ENCODE measurements at regions of chr1 and their contacts with region 1.

Region 1: GRCh38 chr1:185595835-185596667 is 138.1 kb upstream of the HMCN1 start:
- DNase-seq: peak in 34 of 35 experiments; percentile 7 to 74 (median 46)
- ATAC-seq: peak; percentile 63 to 82 (median 76)
- H3K4me3 ChIP-seq: no peak overlapping the region
- H3K4me3 Mint-ChIP-seq: no peak overlapping the region
- H3K27ac ChIP-seq: no peak overlapping the region
- H3K27ac Mint-ChIP-seq: peak overlapping the region; percentile 41 to 75
- H3K4me1 ChIP-seq: peaks cover 9 to 10% of the 10 kb centered on the region in 2 experiments
- H3K4me1 Mint-ChIP-seq: peaks cover 26 to 37% (median 26%) of the 10 kb centered on the region in 3 donors
- H3K27me3 ChIP-seq: no peaks in the 10 kb centered on the region
- H3K27me3 Mint-ChIP-seq: no peaks in the 10 kb centered on the region

Region 2: DNA sequence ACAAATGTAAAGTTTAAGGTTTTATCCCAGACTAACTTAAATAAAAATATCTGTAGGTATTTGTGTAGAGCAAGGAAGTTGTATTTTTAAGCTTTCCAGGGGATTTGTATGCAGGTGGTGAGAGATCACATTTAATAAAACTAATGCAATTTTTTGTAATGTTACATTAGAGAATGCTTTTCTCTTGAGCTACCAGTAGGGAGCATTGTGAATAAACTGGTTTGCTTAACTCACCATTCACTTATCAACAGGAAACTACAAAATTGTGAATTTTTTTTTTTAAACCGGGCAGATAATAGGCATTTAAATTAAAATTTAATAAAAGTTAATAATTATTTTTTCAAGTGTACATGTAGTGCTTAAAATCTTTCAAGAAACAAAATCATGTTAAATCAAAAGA is 357.6 kb before region 1 on chr1:
- CTCF ChIA-PET with region 1: interaction called, 4 to 22 read pairs
- POLR2A ChIA-PET with region 1: no interaction called
- DNase-seq: peak in 1 of 35 experiments; percentile 50
- ATAC-seq: peak in 3 of 4 experiments; percentile 42 to 71 (median 69)
- H3K4me3 ChIP-seq: no peak overlapping the region
- H3K4me3 Mint-ChIP-seq: peak overlapping the region in 2 of 3 donors; percentile 31 to 35
- H3K27ac ChIP-seq: no peak overlapping the region
- H3K27ac Mint-ChIP-seq: peak overlapping the region in 1 of 2 donors; percentile 5
- H3K4me1 ChIP-seq: peaks cover 0 to 14% of the 10 kb centered on the region in 2 experiments
- H3K4me1 Mint-ChIP-seq: peaks cover 30 to 38% (median 34%) of the 10 kb centered on the region in 3 donors
- H3K27me3 ChIP-seq: no peaks in the 10 kb centered on the region
- H3K27me3 Mint-ChIP-seq: no peaks in the 10 kb centered on the region

Region 3: DNA sequence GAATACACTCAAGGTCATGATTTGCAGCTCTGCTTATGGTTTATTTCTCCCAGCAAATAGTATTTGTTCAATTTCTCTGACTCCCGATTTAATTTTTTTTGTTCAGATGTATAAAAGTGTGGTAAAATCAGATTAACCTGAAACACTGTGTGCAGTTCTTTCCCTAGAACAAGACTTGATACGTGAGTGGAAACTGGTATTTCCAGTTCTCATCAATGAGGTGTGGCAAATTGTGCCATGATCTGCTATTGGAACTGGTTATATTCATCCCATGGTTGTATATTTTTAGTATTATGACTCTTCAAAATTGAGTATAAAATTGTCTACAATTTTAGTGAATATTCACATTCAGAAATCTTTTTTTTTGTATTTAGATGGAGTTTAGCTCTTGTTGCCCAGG is 202.2 kb before region 1 on chr1:
- CTCF ChIA-PET with region 1: interaction called, 5 to 10 read pairs
- POLR2A ChIA-PET with region 1: no interaction called
- DNase-seq: no peak
- ATAC-seq: no peak
- H3K4me3 ChIP-seq: no peak overlapping the region
- H3K4me3 Mint-ChIP-seq: no peak overlapping the region
- H3K27ac ChIP-seq: no peak overlapping the region
- H3K27ac Mint-ChIP-seq: no peak overlapping the region
- H3K4me1 ChIP-seq: no peaks in the 10 kb centered on the region
- H3K4me1 Mint-ChIP-seq: peaks cover 0 to 5% (median 3%) of the 10 kb centered on the region in 3 donors
- H3K27me3 ChIP-seq: no peaks in the 10 kb centered on the region
- H3K27me3 Mint-ChIP-seq: no peaks in the 10 kb centered on the region

Region 4: DNA sequence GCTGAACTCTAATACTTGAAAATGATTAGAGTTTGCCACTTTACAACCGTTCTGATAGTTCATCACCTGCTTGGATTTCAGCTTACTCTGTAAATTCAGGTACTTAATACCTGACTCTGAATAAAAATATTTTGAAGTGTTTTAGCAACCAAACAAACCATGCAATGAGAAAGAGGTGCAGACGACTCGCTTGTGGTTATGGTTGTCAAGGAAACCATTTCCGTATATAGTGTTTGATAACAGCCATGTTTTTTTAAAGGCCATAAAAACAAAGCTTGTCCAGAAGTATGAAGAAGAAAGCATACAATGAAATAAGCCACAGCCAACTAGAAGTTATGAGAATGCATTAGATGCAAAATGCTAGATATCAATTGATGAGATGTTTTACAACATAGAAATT is 29.1 kb before region 1 on chr1:
- CTCF ChIA-PET with region 1: interaction called, 4 to 36 read pairs
- POLR2A ChIA-PET with region 1: interaction called, 3 to 8 read pairs
- DNase-seq: peak in 33 of 35 experiments; percentile 8 to 94 (median 52)
- ATAC-seq: peak; percentile 89 to 91 (median 89)
- H3K4me3 ChIP-seq: peak overlapping the region in 1 of 2 donors; percentile 18
- H3K4me3 Mint-ChIP-seq: peak overlapping the region; percentile 55 to 67 (median 62)
- H3K27ac ChIP-seq: peak overlapping the region; percentile 93
- H3K27ac Mint-ChIP-seq: peak overlapping the region; percentile 97 to 98
- H3K4me1 ChIP-seq: peaks cover 34 to 57% of the 10 kb centered on the region in 2 experiments
- H3K4me1 Mint-ChIP-seq: peaks cover 81 to 92% (median 91%) of the 10 kb centered on the region in 3 donors
- H3K27me3 ChIP-seq: no peaks in the 10 kb centered on the region
- H3K27me3 Mint-ChIP-seq: no peaks in the 10 kb centered on the region

Region 5: GRCh38 chr1:185636848-185637247 is 40.8 kb after region 1 on chr1:
- CTCF ChIA-PET with region 1: no interaction called
- POLR2A ChIA-PET with region 1: no interaction called
- DNase-seq: no peak
- ATAC-seq: no peak
- H3K4me3 ChIP-seq: no peak overlapping the region
- H3K4me3 Mint-ChIP-seq: no peak overlapping the region
- H3K27ac ChIP-seq: no peak overlapping the region
- H3K27ac Mint-ChIP-seq: no peak overlapping the region
- H3K4me1 ChIP-seq: no peaks in the 10 kb centered on the region
- H3K4me1 Mint-ChIP-seq: peaks cover 0 to 5% (median 5%) of the 10 kb centered on the region in 3 donors
- H3K27me3 ChIP-seq: no peaks in the 10 kb centered on the region
- H3K27me3 Mint-ChIP-seq: no peaks in the 10 kb centered on the region

Region 6: DNA sequence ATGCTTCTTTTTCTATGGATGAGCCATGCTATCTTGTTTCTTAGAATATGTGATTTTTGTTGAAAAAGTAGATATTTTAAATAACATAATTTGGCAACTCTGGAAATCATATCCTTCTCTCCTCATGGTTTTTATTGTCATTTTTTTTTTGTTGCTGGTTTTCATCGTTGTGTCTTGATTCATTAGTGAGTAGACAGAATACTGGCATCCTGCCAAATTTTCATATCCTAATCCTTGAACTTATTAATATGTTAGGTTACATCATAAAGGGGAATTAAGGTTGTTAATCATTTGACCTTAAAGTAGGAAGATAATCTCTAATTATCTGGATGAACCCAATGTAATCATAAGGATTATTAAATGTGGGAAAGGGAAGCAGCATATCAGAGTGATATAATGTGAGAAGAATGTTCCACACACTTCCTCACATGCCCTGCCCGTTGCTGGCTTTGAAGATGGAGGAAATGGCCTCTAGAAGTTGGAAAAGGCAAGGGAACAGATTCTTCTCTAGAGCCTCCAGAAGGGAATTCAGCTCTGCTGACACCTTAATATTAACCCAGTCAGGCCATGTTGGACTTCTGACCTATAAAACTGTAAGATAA is 437.8 kb after region 1 on chr1:
- CTCF ChIA-PET with region 1: no interaction called
- POLR2A ChIA-PET with region 1: no interaction called
- DNase-seq: no peak
- ATAC-seq: no peak
- H3K4me3 ChIP-seq: no peak overlapping the region
- H3K4me3 Mint-ChIP-seq: no peak overlapping the region
- H3K27ac ChIP-seq: no peak overlapping the region
- H3K27ac Mint-ChIP-seq: no peak overlapping the region
- H3K4me1 ChIP-seq: no peaks in the 10 kb centered on the region
- H3K4me1 Mint-ChIP-seq: no peaks in the 10 kb centered on the region
- H3K27me3 ChIP-seq: no peaks in the 10 kb centered on the region
- H3K27me3 Mint-ChIP-seq: peaks cover 0 to 12% of the 10 kb centered on the region in 2 donors

Measured in T-cell (primary cell).